Aorta (tissue), 5 donors: ENCODE measurements at regions of chr17 and their contacts with region 1.

Region 1: GRCh38 chr17:34306466-34306865 is 12.8 kb upstream of the CCL8 start:
- DNase-seq: no peak
- ATAC-seq: peak; percentile 82
- H3K4me3 ChIP-seq: no peak overlapping the region
- H3K27ac ChIP-seq: no peak overlapping the region
- H3K4me1 ChIP-seq: peaks cover 0 to 1% of the 10 kb centered on the region in 2 donors
- H3K27me3 ChIP-seq: no peaks in the 10 kb centered on the region

Region 2: GRCh38 chr17:34068506-34069035 is 237.9 kb before region 1 on chr17:
- intact Hi-C with region 1: no loop called
- DNase-seq: no peak
- ATAC-seq: no peak
- H3K4me3 ChIP-seq: no peak overlapping the region
- H3K27ac ChIP-seq: no peak overlapping the region
- H3K4me1 ChIP-seq: no peaks in the 10 kb centered on the region
- H3K27me3 ChIP-seq: no peaks in the 10 kb centered on the region

Region 3: GRCh38 chr17:34248511-34249024 is 57.9 kb before region 1 on chr17:
- intact Hi-C with region 1: loop called (anchors 5 kb)
- DNase-seq: no peak
- ATAC-seq: peak; percentile 57
- H3K4me3 ChIP-seq: no peak overlapping the region
- H3K27ac ChIP-seq: peak overlapping the region; percentile 91 to 97
- H3K4me1 ChIP-seq: peaks cover 16 to 35% of the 10 kb centered on the region in 2 donors
- H3K27me3 ChIP-seq: no peaks in the 10 kb centered on the region

Region 4: DNA sequence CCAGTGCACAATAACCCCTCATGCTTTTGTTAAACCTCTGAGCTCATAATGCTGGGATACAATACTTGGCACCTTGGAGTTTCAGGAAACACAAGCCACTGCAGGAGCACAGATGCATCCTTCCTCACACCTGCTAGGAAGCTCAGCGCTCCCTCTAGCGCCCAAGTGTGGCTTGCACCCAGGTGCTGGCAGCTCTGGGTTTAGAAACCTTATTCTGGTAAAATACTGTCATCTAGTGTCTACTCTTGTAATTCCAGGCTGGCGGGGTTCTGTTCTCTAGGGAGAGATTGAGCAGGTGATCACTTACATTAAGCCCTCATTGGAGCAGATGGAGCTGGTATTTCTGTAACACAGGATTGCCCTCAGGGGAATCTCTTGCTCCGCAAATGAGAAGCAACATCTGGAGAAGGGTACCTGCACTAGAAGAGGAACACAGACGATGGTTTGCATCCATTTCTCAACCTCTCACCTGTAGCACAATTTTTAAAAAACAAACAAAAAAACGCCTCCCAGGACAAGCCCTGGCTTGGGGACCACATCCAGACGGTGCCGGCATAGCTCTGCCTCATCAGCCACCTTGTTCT is 55.1 kb after region 1 on chr17:
- intact Hi-C with region 1: loop called in 1 of 2 experiments (anchors 1 kb)
- DNase-seq: peak; percentile 92 to 97
- ATAC-seq: peak; percentile 92
- H3K4me3 ChIP-seq: no peak overlapping the region
- H3K27ac ChIP-seq: no peak overlapping the region
- H3K4me1 ChIP-seq: no peaks in the 10 kb centered on the region
- H3K27me3 ChIP-seq: no peaks in the 10 kb centered on the region